Sciatic nerve (tissue), 2 donors: ENCODE measurements at regions of chr3 and their contacts with region 1.

Region 1: DNA sequence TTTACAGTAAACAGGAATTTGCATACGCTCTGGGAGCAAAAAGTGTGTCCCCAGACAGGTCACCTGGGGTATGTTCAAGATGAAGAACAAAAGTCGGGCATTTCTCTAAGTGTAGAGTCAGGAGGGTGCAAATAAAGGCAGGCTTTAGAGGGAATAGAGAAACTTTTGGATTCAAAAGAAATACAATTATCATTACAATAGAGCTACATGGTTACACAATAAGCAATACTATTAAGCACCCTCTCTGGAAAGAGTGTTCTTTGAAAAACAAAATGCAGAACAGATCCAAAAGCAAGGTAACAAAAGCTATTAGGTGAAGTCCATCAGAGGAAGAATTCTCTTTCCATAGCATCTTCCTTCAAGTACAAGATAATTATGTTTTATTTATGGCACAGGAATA is 679.7 kb downstream of the FHIT start:
- DNase-seq: no peak
- ATAC-seq: no peak

Region 2: DNA sequence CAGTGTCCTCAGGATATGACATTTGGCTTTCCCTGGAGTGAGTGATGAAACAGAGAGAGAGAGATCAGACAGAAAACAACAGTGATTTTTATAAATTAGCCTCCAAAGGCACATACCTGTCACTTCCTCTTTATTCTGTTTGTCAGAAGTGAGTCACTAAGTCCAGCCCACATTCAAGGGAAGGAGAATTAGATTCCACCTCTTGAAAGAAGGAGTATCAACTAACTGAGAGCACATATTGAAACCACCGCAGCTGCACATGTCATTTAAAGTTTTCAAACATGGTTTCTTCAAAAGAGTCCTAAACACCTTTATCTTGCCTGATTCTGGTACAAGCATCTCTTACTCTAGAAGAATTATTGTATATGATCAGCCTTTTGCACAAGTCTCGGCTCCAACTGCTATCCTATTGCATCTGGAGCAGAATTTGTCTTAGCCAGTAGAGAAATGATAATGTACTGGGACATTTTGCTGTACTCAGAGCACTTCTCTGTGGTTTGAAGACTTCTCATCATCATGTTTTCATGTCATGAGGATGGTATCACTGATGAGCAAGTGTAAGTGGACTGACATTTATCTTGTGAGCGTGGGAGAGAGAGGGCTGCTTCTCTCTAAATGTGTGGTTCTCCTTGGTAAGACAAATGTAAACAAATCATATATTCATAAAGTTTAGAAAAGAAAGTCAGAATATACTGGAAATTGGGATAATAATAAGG is 1182.8 kb before region 1 on chr3:
- intact Hi-C with region 1: no loop called
- DNase-seq: no peak
- ATAC-seq: no peak

Region 3: GRCh38 chr3:60643831-60644230 is 72.3 kb after region 1 on chr3:
- intact Hi-C with region 1: loop called (anchors 2 kb)
- DNase-seq: no peak
- ATAC-seq: no peak